ENCODE measurements at regions of chr18 and their contacts with region 1.

Region 1: DNA sequence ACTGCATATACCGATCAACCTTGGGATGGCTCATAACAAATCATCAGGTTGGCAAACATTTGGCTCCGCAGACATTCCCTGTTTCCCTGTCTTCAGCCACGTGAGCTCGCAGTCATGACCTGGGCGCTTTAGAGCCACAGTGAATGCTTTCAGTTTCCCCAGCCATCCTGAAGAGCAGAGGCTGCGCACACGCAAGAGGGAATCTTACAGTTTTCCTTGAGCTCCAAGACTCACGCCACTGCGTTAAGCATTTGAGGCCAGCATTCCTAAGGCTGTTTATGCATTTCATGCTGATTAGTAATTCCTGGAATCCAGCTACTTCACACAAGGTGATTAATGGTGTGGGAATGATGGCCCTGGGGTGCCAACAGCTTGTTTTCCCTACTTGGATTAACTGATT is 95.1 kb downstream of the MTCL1 start:
- DNase-seq: no peak
- ATAC-seq: peak; percentile 71
- H3K4me3 Mint-ChIP-seq: no peak overlapping the region; the same call in 1 of the 2 replicates
- H3K27ac Mint-ChIP-seq: peak overlapping the region; percentile 97
- H3K4me1 Mint-ChIP-seq: peaks cover 64% of the 10 kb centered on the region
- H3K27me3 Mint-ChIP-seq: no peaks in the 10 kb centered on the region
- CTCF ChIP-seq: no peak

Region 2: DNA sequence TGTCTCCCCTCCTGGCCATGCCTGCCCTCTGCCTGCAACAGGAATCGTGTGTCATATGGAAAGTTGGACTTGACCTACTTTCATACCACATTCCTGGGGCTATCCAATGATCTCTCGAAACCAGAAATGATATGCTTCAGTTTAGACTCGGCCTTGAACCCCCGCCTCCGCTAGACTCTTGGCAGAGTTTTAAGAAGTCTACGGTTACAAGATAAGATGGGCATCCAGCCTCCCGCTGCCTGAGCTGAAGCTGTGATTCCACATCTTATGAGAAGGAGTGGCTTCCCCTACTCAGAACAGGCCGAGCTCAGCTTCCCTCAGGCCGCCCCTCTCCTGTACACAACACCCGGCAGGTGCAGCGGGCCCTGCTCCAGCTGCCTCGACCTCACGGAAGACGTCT is 21.2 kb before region 1 on chr18:
- CTCF ChIA-PET with region 1: no interaction called
- POLR2A ChIA-PET with region 1: interaction called, 13 read pairs
- DNase-seq: no peak
- ATAC-seq: no peak
- H3K4me3 Mint-ChIP-seq: no peak overlapping the region
- H3K27ac Mint-ChIP-seq: peak overlapping the region; percentile 35
- H3K4me1 Mint-ChIP-seq: peaks cover 40% of the 10 kb centered on the region
- H3K27me3 Mint-ChIP-seq: no peaks in the 10 kb centered on the region
- CTCF ChIP-seq: no peak

Region 3: GRCh38 chr18:8835521-8835953 is 35.1 kb after region 1 on chr18:
- CTCF ChIA-PET with region 1: no interaction called
- POLR2A ChIA-PET with region 1: no interaction called
- DNase-seq: no peak
- ATAC-seq: no peak
- H3K4me3 Mint-ChIP-seq: no peak overlapping the region
- H3K27ac Mint-ChIP-seq: no peak overlapping the region
- H3K4me1 Mint-ChIP-seq: peaks cover 4% of the 10 kb centered on the region
- H3K27me3 Mint-ChIP-seq: no peaks in the 10 kb centered on the region; the same call in 1 of the 2 replicates
- CTCF ChIP-seq: no peak